ENCODE measurements at regions of chr1 and their contacts with region 1.

Region 1: GRCh38 chr1:185987611-185988321 is 253.6 kb downstream of the HMCN1 start:
- DNase-seq: peak; percentile 11
- H3K4me3 Mint-ChIP-seq: peak overlapping the region; percentile 52
- H3K27ac Mint-ChIP-seq: peak overlapping the region; percentile 93
- H3K4me1 Mint-ChIP-seq: peaks cover 12% of the 10 kb centered on the region
- H3K27me3 Mint-ChIP-seq: no peaks in the 10 kb centered on the region

Region 2: DNA sequence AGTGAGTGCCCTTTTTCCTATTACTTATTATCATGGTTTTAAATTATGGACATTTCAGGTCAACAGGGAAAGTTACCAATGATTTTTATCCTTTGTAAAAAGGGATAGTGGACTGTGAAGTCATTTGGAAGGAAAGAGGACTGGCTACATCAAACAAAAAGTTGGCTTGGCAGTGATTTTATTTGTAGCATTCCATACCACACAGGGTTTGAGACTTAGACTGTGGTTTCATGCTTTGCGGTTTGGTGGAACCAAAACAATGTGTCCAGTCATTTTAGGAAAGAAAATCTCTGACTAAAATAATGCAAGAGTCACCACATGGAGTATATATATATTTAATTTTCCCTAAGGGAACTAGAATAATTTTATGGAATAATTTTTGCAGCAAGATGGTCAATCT is 14.1 kb before region 1 on chr1:
- CTCF ChIA-PET with region 1: no interaction called
- POLR2A ChIA-PET with region 1: no interaction called
- intact Hi-C with region 1: no loop called
- DNase-seq: no peak
- H3K4me3 Mint-ChIP-seq: no peak overlapping the region
- H3K27ac Mint-ChIP-seq: no peak overlapping the region
- H3K4me1 Mint-ChIP-seq: no peaks in the 10 kb centered on the region
- H3K27me3 Mint-ChIP-seq: peaks cover 2% of the 10 kb centered on the region

Region 3: GRCh38 chr1:186009039-186009737 is 21.4 kb after region 1 on chr1:
- CTCF ChIA-PET with region 1: no interaction called
- POLR2A ChIA-PET with region 1: no interaction called
- intact Hi-C with region 1: loop called (anchors 1 kb)
- DNase-seq: no peak
- H3K4me3 Mint-ChIP-seq: no peak overlapping the region
- H3K27ac Mint-ChIP-seq: no peak overlapping the region
- H3K4me1 Mint-ChIP-seq: peaks cover 4% of the 10 kb centered on the region
- H3K27me3 Mint-ChIP-seq: peaks cover 2% of the 10 kb centered on the region

Measured in activated CD4-positive, alpha-beta memory T cell treated with anti-CD3 and anti-CD28 coated beads for 36 hours (primary cell).